MCF 10A (cell line): ENCODE measurements at regions of chr1 and their contacts with region 1.

Region 1: GRCh38 chr1:225652729-225653462 is at the start of gene ENAH:
- DNase-seq: peak; percentile 93
- H3K4me3 Mint-ChIP-seq: peak within 1 kb of the TSS; percentile 99
- H3K27ac Mint-ChIP-seq: peak within 1 kb of the TSS; percentile 94
- H3K4me1 Mint-ChIP-seq: peaks cover 67% of the 10 kb centered on the region
- H3K27me3 Mint-ChIP-seq: no peaks in the 10 kb centered on the region
- CTCF ChIP-seq: no peak
- total RNA-seq, gene ENAH: 346 and 420 TPM in 2 replicates

Region 2: DNA sequence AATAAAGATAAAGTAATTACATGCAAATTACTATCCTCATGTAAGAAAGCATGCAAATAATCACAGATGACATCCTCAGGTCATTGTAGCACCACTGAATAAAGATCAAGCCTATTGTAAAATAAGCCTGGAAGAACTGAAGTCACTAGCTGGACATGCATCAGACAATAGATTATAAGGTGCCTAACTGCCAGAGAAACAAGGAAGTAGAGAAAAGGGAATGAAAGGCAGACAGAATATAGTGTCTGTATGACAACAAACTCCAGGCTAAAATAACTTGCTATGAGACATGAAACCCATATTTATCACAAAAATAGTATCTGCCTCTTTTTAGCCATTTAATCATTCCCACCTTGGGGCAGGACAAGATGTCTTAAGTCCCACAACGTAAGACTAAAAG is 108.6 kb before region 1 on chr1:
- CTCF ChIA-PET with region 1: interaction called, 4 read pairs
- POLR2A ChIA-PET with region 1: interaction called, 13 read pairs
- intact Hi-C with region 1: no loop called
- DNase-seq: no peak
- H3K4me3 Mint-ChIP-seq: no peak overlapping the region
- H3K27ac Mint-ChIP-seq: no peak overlapping the region
- H3K4me1 Mint-ChIP-seq: peaks cover 12% of the 10 kb centered on the region
- H3K27me3 Mint-ChIP-seq: no peaks in the 10 kb centered on the region
- CTCF ChIP-seq: no peak

Region 3: DNA sequence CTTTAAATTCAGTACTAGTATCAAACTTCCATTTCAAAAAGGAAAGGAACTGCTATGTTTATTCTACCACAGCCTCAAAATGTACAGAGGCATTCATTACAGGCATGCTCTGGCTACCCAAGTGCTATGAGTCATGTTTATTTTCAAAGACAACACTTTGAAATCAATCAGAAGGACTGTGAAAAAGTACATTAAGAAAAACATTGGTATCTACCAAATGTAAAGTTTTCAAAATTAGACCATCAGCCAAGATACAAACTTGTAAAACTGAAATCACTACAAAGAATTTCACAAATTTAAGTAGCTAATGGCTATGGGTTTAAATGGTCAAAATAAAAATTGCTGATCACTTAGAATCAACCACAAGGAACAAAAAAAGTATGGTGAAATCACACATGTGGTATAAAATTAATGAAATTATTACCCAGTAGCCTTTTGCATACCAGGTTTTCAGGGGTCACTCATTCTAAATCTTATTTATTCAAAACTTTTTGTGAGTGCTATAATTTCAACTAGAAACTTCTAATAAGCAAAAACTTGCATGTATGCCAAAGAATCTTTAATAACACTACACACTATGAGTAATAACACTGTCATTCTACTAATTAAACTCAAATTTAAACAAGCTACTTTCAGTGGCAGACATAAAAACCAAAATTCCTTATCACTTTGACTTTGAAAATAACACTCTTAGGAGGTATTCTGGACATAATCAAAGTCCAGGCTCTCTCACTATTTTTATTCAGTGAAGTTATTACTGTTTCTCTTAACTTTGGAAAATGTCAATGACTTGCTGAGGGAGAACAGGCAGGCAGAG is 49.1 kb before region 1 on chr1:
- CTCF ChIA-PET with region 1: interaction called, 8 read pairs
- POLR2A ChIA-PET with region 1: interaction called, 89 read pairs
- intact Hi-C with region 1: loop called (anchors 1 kb)
- DNase-seq: peak; percentile 86
- H3K4me3 Mint-ChIP-seq: peak overlapping the region; percentile 68
- H3K27ac Mint-ChIP-seq: peak overlapping the region; percentile 95
- H3K4me1 Mint-ChIP-seq: peaks cover 61% of the 10 kb centered on the region
- H3K27me3 Mint-ChIP-seq: no peaks in the 10 kb centered on the region
- CTCF ChIP-seq: no peak

Region 4: DNA sequence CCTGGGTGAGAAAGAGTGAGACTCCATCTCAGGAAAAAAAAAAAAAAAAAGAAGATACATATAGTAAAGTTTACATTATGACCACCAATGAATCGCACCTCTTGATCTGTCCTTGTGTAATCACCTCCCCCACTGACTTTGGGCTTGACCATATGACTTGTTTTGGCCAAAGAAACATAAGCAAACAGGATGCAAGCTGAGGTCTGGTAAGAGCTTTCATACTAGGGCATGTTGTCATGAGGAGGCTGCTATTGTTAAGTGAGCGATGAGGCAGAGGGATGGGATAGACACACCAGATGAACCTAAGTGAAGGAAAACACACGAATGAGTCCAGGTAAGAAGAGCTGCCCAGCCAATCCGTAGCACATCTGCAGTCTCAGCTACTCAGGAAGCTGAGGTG is 10.7 kb before region 1 on chr1:
- CTCF ChIA-PET with region 1: interaction called, 4 read pairs
- POLR2A ChIA-PET with region 1: interaction called, 50 read pairs
- intact Hi-C with region 1: no loop called
- DNase-seq: no peak
- H3K4me3 Mint-ChIP-seq: no peak overlapping the region
- H3K27ac Mint-ChIP-seq: no peak overlapping the region
- H3K4me1 Mint-ChIP-seq: peaks cover 17% of the 10 kb centered on the region
- H3K27me3 Mint-ChIP-seq: no peaks in the 10 kb centered on the region
- CTCF ChIP-seq: no peak

Region 5: GRCh38 chr1:225735252-225736149 is 82.6 kb after region 1 on chr1:
- CTCF ChIA-PET with region 1: interaction called, 9 read pairs
- POLR2A ChIA-PET with region 1: interaction called, 243 read pairs
- intact Hi-C with region 1: loop called (anchors 1 kb)
- DNase-seq: peak; percentile 100
- H3K4me3 Mint-ChIP-seq: peak overlapping the region; percentile 60
- H3K27ac Mint-ChIP-seq: peak overlapping the region; percentile 89
- H3K4me1 Mint-ChIP-seq: peaks cover 33% of the 10 kb centered on the region
- H3K27me3 Mint-ChIP-seq: no peaks in the 10 kb centered on the region
- CTCF ChIP-seq: peak; percentile 9

Region 6: DNA sequence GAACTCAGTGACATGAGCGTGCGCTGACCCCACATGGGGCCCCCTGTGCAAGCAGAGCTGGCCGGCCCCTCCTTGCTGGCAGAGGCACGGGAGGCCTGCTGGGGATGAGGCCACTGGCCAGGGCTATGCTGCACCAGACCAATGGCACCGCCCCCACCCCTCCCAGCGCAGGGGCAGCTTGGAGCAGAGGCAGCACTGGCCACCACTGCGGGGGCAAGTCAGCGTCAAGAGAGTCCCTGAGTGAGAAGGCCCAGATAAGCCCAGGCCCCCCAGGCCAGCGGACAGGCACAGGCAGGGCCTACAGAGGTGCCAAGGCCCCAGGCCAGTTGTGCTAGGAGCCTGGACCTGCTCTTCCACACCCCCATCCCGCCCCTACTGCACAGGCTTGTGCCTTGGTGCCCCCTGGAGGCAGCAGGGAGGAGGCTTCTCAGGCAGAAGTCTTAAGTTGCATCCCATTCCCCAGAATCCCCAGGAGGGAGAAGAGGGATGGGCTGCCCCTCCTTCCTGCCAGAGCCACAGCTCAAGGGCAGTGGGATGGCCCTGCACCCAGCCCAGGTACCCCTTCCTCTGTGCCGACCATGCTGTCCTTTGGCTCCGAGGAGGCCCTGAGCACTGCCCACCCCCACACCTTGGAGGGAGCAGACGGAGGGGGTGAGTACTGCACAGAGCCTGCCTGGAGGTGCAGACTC is 192.8 kb after region 1 on chr1:
- CTCF ChIA-PET with region 1: interaction called, 5 read pairs
- POLR2A ChIA-PET with region 1: no interaction called
- intact Hi-C with region 1: loop called (anchors 2 kb)
- DNase-seq: peak; percentile 95
- H3K4me3 Mint-ChIP-seq: no peak overlapping the region
- H3K27ac Mint-ChIP-seq: no peak overlapping the region
- H3K4me1 Mint-ChIP-seq: no peaks in the 10 kb centered on the region
- H3K27me3 Mint-ChIP-seq: no peaks in the 10 kb centered on the region
- CTCF ChIP-seq: peak; percentile 97

Region 7: DNA sequence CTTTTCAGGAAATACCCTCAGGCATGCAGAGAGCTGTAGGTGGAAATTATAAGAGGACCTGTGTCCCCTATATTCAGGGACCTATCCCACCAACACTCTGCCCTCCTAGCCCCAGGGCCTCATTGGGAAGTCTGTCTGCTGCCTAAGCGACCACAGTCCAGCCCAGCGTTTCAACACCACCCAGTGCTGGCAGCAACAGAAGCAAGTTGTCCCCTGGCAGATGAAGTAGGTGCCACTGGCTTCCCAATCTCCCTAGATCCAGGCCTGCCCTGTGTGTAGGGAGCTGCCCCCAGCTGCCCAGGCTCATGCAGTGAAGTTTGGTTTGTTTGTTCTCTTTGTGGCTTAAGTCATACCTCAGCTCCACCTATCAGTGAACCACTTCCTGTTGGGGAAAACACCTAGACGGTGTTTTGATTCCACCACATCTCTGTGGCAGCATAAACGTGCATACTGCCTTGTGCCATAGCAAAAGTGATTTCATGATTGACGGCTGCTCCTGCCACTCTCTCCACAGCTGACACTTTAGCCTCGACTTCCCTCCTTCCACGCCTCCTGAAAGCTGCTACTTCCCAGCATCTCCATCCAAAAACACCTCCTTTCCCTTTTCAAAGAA is 244.1 kb after region 1 on chr1:
- CTCF ChIA-PET with region 1: no interaction called
- POLR2A ChIA-PET with region 1: no interaction called
- intact Hi-C with region 1: no loop called
- DNase-seq: peak; percentile 78
- H3K4me3 Mint-ChIP-seq: no peak overlapping the region
- H3K27ac Mint-ChIP-seq: peak overlapping the region; percentile 78
- H3K4me1 Mint-ChIP-seq: peaks cover 17% of the 10 kb centered on the region
- H3K27me3 Mint-ChIP-seq: no peaks in the 10 kb centered on the region
- CTCF ChIP-seq: no peak

Region 8: GRCh38 chr1:226162898-226163297 is 510.0 kb after region 1 on chr1:
- CTCF ChIA-PET with region 1: no interaction called
- POLR2A ChIA-PET with region 1: no interaction called
- intact Hi-C with region 1: no loop called
- DNase-seq: no peak
- H3K4me3 Mint-ChIP-seq: no peak overlapping the region
- H3K27ac Mint-ChIP-seq: no peak overlapping the region
- H3K4me1 Mint-ChIP-seq: no peaks in the 10 kb centered on the region
- H3K27me3 Mint-ChIP-seq: no peaks in the 10 kb centered on the region
- CTCF ChIP-seq: no peak